Caco-2 (cell line): ENCODE measurements at regions of chr12 and their contacts with region 1.

Region 1: DNA sequence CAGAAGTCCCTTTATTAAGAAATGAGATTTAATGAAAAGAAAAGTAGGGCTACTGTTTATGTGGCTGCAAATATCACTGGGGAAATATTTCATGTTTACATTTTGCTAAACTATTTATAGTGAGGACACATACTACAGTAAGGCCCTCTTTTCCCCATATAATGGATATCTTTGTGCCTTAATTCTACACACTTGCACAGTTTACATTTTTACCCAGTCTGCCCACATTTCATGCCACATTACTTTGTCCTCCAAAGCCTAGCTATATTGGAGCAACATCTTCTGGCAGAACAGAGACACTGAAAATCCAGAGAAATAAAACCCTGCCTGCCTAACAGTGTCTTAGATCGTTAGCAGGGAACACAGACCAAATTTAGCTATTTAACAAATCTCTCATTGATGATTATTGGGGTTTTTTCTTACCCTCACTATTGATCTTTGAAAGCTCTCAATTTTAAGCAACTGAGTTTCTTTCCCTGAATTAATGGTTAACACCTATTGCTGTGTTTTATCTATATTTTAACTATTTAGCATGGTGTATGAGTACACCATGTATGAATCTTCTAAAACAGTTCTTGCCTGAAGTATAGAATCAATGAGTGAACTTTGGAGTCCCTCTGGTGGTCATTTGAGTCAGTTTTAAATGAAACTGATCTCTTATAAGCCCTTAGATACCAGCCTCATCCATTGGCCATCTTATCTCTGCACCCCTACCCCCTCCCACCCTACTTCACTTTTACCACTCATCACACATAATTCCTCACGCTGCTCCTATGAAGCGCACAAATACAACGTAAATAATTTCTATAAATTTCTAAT is 170.2 kb downstream of the BCAT1 start:
- DNase-seq: peak in 1 of 2 experiments; percentile 65
- H3K4me3 ChIP-seq: no peak overlapping the region
- H3K4me3 Mint-ChIP-seq: no peak overlapping the region
- H3K27ac Mint-ChIP-seq: peak overlapping the region; percentile 42
- H3K4me1 ChIP-seq: peaks cover 24% of the 10 kb centered on the region
- H3K4me1 Mint-ChIP-seq: peaks cover 37% of the 10 kb centered on the region
- H3K27me3 ChIP-seq: no peaks in the 10 kb centered on the region
- H3K27me3 Mint-ChIP-seq: no peaks in the 10 kb centered on the region
- CTCF ChIP-seq: peak; percentile 72 to 90

Region 2: GRCh38 chr12:24109381-24110039 is 669.2 kb before region 1 on chr12:
- CTCF ChIA-PET with region 1: no interaction called
- POLR2A ChIA-PET with region 1: no interaction called
- intact Hi-C with region 1: loop called (anchors 1 kb)
- DNase-seq: peak in 1 of 2 experiments; percentile 36
- H3K4me3 ChIP-seq: no peak overlapping the region
- H3K4me3 Mint-ChIP-seq: no peak overlapping the region
- H3K27ac Mint-ChIP-seq: no peak overlapping the region
- H3K4me1 ChIP-seq: no peaks in the 10 kb centered on the region
- H3K4me1 Mint-ChIP-seq: no peaks in the 10 kb centered on the region
- H3K27me3 ChIP-seq: no peaks in the 10 kb centered on the region
- H3K27me3 Mint-ChIP-seq: no peaks in the 10 kb centered on the region
- CTCF ChIP-seq: peak; percentile 73 to 76

Region 3: GRCh38 chr12:24505366-24506015 is 273.2 kb before region 1 on chr12:
- CTCF ChIA-PET with region 1: no interaction called
- POLR2A ChIA-PET with region 1: no interaction called
- intact Hi-C with region 1: loop called (anchors 5 kb)
- DNase-seq: no peak
- H3K4me3 ChIP-seq: no peak overlapping the region
- H3K4me3 Mint-ChIP-seq: no peak overlapping the region
- H3K27ac Mint-ChIP-seq: no peak overlapping the region
- H3K4me1 ChIP-seq: peaks cover 9% of the 10 kb centered on the region
- H3K4me1 Mint-ChIP-seq: peaks cover 17% of the 10 kb centered on the region
- H3K27me3 ChIP-seq: no peaks in the 10 kb centered on the region
- H3K27me3 Mint-ChIP-seq: no peaks in the 10 kb centered on the region
- CTCF ChIP-seq: no peak

Region 4: GRCh38 chr12:24596768-24597388 is 181.8 kb before region 1 on chr12:
- CTCF ChIA-PET with region 1: no interaction called
- POLR2A ChIA-PET with region 1: no interaction called
- intact Hi-C with region 1: loop called (anchors 1 kb)
- DNase-seq: peak in 1 of 2 experiments; percentile 47
- H3K4me3 ChIP-seq: no peak overlapping the region
- H3K4me3 Mint-ChIP-seq: no peak overlapping the region
- H3K27ac Mint-ChIP-seq: no peak overlapping the region
- H3K4me1 ChIP-seq: no peaks in the 10 kb centered on the region; the same call in 1 of the 2 replicates
- H3K4me1 Mint-ChIP-seq: peaks cover 18% of the 10 kb centered on the region
- H3K27me3 ChIP-seq: no peaks in the 10 kb centered on the region
- H3K27me3 Mint-ChIP-seq: no peaks in the 10 kb centered on the region
- CTCF ChIP-seq: peak; percentile 76 to 79

Region 5: GRCh38 chr12:24714237-24714636 is 64.5 kb before region 1 on chr12:
- CTCF ChIA-PET with region 1: no interaction called
- POLR2A ChIA-PET with region 1: no interaction called
- intact Hi-C with region 1: loop called (anchors 1 kb)
- DNase-seq: no peak
- H3K4me3 ChIP-seq: no peak overlapping the region
- H3K4me3 Mint-ChIP-seq: no peak overlapping the region
- H3K27ac Mint-ChIP-seq: no peak overlapping the region
- H3K4me1 ChIP-seq: peaks cover 26% of the 10 kb centered on the region
- H3K4me1 Mint-ChIP-seq: peaks cover 11% of the 10 kb centered on the region
- H3K27me3 ChIP-seq: no peaks in the 10 kb centered on the region
- H3K27me3 Mint-ChIP-seq: no peaks in the 10 kb centered on the region
- CTCF ChIP-seq: no peak

Region 6: GRCh38 chr12:24838531-24838950 is 59.8 kb after region 1 on chr12:
- CTCF ChIA-PET with region 1: no interaction called
- POLR2A ChIA-PET with region 1: no interaction called
- intact Hi-C with region 1: loop called (anchors 1 kb)
- DNase-seq: no peak
- H3K4me3 ChIP-seq: no peak overlapping the region
- H3K4me3 Mint-ChIP-seq: no peak overlapping the region
- H3K27ac Mint-ChIP-seq: no peak overlapping the region
- H3K4me1 ChIP-seq: no peaks in the 10 kb centered on the region
- H3K4me1 Mint-ChIP-seq: peaks cover 7% of the 10 kb centered on the region
- H3K27me3 ChIP-seq: no peaks in the 10 kb centered on the region
- H3K27me3 Mint-ChIP-seq: no peaks in the 10 kb centered on the region
- CTCF ChIP-seq: no peak